Sigmoid colon (tissue), 7 donors: ENCODE measurements at regions of chr3 and their contacts with region 1.

Region 1: GRCh38 chr3:141561426-141562034 is 74.7 kb downstream of the RASA2 start:
- DNase-seq: no peak
- H3K4me3 ChIP-seq: no peak overlapping the region
- H3K27ac ChIP-seq: no peak overlapping the region
- H3K4me1 ChIP-seq: peaks cover 0 to 11% (median 3%) of the 10 kb centered on the region in 4 donors
- H3K27me3 ChIP-seq: no peaks in the 10 kb centered on the region
- CTCF ChIP-seq: peak; percentile 92 to 99 (median 96)
- EP300 ChIP-seq: no peak
- POLR2A ChIP-seq: no peak

Region 2: GRCh38 chr3:141311496-141312353 is 249.8 kb before region 1 on chr3:
- intact Hi-C with region 1: loop called (anchors 2 kb)
- DNase-seq: peak; percentile 99
- H3K4me3 ChIP-seq: peak overlapping the region; percentile 56 to 68 (median 59)
- H3K27ac ChIP-seq: peak overlapping the region; percentile 73 to 84 (median 77)
- H3K4me1 ChIP-seq: peaks cover 0 to 19% (median 14%) of the 10 kb centered on the region in 4 donors
- H3K27me3 ChIP-seq: no peaks in the 10 kb centered on the region
- CTCF ChIP-seq: peak; percentile 51 to 75 (median 69)
- EP300 ChIP-seq: peak in 1 of 4 donors; percentile 77
- POLR2A ChIP-seq: peak; percentile 18 to 33

Region 3: DNA sequence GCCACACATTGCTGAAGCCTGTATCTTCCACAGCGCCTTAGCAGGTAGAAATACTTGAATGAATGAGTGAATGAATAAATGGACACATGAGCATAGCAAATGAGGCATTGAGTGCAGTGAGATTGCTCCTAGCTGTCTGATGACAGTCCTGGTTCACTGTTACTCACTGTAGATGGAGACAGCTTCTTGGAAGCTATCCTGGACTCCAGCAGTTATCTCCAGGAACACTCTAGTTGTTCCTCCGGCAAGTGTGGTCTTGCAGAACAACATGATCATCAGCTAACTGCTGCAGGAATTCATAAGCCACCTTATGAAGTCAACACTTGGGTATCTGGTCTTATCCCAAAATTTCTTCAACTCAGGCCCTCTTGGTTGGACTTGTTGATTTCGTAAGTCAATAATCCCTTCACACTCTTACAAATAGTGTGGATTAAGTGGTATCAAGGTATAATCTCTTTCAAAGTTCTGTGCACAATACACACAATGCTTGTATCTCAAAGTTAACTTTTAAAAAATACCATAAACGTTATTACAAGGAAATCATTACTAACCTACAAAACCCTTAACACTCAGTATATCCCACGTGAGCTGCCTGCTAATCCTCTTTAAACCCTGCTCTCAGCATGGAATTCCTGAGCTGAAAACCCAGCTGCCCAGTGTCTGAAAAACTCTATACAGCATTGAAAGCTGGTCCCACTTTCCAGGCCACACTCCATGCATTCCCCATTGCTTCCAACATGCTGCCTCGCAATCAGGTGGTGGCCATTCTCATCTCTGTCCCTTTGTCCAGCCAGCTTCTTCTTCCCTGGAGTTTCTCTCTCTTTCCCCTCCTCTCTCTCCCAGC is 207.7 kb before region 1 on chr3:
- intact Hi-C with region 1: loop called (anchors 5 kb)
- DNase-seq: no peak
- H3K4me3 ChIP-seq: no peak overlapping the region
- H3K27ac ChIP-seq: no peak overlapping the region
- H3K4me1 ChIP-seq: no peaks in the 10 kb centered on the region
- H3K27me3 ChIP-seq: no peaks in the 10 kb centered on the region
- CTCF ChIP-seq: no peak
- EP300 ChIP-seq: no peak
- POLR2A ChIP-seq: no peak

Region 4: GRCh38 chr3:141460097-141460704 is 101.3 kb before region 1 on chr3:
- intact Hi-C with region 1: loop called (anchors 1 kb)
- DNase-seq: peak; percentile 93
- H3K4me3 ChIP-seq: no peak overlapping the region
- H3K27ac ChIP-seq: no peak overlapping the region
- H3K4me1 ChIP-seq: peaks cover 0 to 7% (median 5%) of the 10 kb centered on the region in 4 donors
- H3K27me3 ChIP-seq: no peaks in the 10 kb centered on the region
- CTCF ChIP-seq: peak; percentile 83 to 89 (median 86)
- EP300 ChIP-seq: no peak
- POLR2A ChIP-seq: no peak